ENCODE measurements at regions of chr3 and their contacts with region 1.

Region 1: GRCh38 chr3:181683563-181683962 is 28.2 kb upstream of the SOX2 start:
- DNase-seq: no peak

Region 2: DNA sequence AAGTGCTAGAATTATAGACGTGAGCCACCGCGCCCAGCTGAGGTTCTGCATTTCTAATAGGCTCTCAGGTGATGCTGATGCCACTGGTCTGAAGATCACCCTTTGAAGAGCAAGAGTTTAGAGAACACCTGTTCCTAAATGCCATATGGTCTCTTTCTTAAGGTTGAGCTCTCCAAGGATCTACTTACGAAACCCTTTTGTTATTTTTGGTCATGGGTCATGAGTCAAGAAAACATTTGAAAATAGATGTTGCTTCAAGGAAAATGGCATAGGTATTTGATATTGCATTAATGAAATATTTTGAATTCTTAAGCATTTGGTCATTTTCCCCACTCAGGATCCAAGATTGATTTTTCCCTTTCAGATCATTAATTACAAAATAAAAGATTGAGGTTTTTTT is 46.5 kb before region 1 on chr3:
- intact Hi-C with region 1: loop called (anchors 10 kb)
- DNase-seq: no peak

Region 3: GRCh38 chr3:181660337-181660736 is 23.2 kb before region 1 on chr3:
- intact Hi-C with region 1: no loop called
- DNase-seq: no peak

Measured in posterior cingulate gyrus (tissue), 11 donors.